ENCODE measurements at regions of chr12 and their contacts with region 1.

Region 1: DNA sequence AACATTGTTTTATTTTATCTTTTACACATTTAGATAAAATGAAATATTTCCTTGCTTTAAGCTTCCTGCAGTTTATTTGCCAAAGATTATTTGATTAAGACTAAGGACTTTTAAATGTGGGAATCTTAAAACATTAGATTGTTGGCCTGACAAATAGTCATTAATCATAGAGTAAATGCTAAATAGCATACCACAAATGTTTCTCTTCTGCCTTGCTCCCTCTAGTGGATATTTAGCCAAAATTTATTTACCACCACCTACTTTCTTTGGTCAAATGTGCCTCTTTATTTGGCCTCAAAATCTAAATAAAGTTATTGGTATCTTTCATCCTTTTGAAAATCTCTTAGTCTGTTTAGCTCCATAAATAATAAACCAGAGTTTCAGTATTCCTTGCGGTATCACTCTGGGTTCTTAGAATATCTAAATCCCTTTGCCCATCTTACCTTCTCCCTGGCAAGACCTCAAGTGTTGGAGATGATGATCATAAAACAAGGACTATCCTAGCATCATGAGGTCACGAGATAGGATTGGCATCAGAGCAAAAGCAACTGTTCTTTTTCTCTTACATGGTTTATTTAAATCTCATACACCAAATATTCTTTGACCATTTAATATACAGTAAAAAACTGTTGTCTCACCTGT is 150.6 kb upstream of the AEBP2 start:
- DNase-seq: no peak
- ATAC-seq: peak; percentile 69
- H3K4me3 ChIP-seq: no peak overlapping the region
- H3K27ac ChIP-seq: no peak overlapping the region
- H3K4me1 ChIP-seq: no peaks in the 10 kb centered on the region
- H3K27me3 ChIP-seq: no peaks in the 10 kb centered on the region
- CTCF ChIP-seq: peak; percentile 46 to 59 (median 58); a peak in 5 of 6 replicates
- EP300 ChIP-seq: no peak
- POLR2A ChIP-seq: no peak
- RAD21 ChIP-seq: peak; percentile 45; the same call in 1 of the 2 replicates

Region 2: GRCh38 chr12:19299765-19300164 is 11.0 kb after region 1 on chr12:
- CTCF ChIA-PET with region 1: interaction called, 10 read pairs
- POLR2A ChIA-PET with region 1: no interaction called
- RAD21 ChIA-PET with region 1: no interaction called
- SMC1A ChIA-PET with region 1: interaction called, 4 read pairs
- in situ Hi-C with region 1: no loop called
- intact Hi-C with region 1: no loop called
- DNase-seq: no peak
- ATAC-seq: no peak
- H3K4me3 ChIP-seq: no peak overlapping the region
- H3K27ac ChIP-seq: no peak overlapping the region
- H3K4me1 ChIP-seq: no peaks in the 10 kb centered on the region
- H3K27me3 ChIP-seq: no peaks in the 10 kb centered on the region
- CTCF ChIP-seq: no peak
- EP300 ChIP-seq: no peak
- POLR2A ChIP-seq: no peak
- RAD21 ChIP-seq: no peak

Measured in GM12878 (cell line).